Activated T-helper 1 cell treated with anti-CD3 and anti-CD28 coated beads, Interleukin-12 subunit alpha, Interleukin-12 subunit beta, Interleukin-2, Interleukin-4 antibody, amounts not matched to agents 30 ng/mL and 10 ng/mL and 1 ng/mL, durations not matched to agents 14 hours and 24 hours and 36 hours (primary cell): ENCODE measurements at regions of chr4 and their contacts with region 1.

Region 1: GRCh38 chr4:98928505-98929340 is at the start of gene EIF4E:
- DNase-seq: peak; percentile 96
- H3K4me3 Mint-ChIP-seq: peak within 1 kb of the TSS; percentile 98
- H3K27ac Mint-ChIP-seq: peak within 1 kb of the TSS; percentile 100
- H3K4me1 Mint-ChIP-seq: peaks cover 46% of the 10 kb centered on the region
- H3K27me3 Mint-ChIP-seq: no peaks in the 10 kb centered on the region
- total RNA-seq, gene EIF4E: 137 and 147 TPM in 2 replicates

Region 2: DNA sequence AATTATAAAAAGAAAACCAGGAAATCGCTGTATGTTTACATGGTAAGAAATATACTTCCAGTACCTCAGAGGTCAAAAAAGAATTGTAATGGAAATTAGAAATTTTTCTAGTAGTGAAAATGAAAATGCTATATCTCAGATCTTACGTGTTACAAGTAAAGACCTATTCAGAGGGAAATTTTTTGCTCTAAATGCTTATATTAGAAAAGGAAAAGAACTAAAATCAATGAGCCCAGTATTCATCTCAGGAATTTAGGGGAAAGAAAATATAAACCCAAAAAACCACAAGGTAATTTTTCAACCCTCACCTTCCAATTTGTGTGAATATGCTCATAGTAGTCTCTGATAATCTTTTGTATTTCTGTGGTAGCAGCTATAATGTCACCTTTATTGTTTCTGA is 521.9 kb before region 1 on chr4:
- intact Hi-C with region 1: loop called (anchors 5 kb)
- DNase-seq: no peak
- H3K4me3 Mint-ChIP-seq: no peak overlapping the region
- H3K27ac Mint-ChIP-seq: no peak overlapping the region
- H3K4me1 Mint-ChIP-seq: peaks cover 25% of the 10 kb centered on the region
- H3K27me3 Mint-ChIP-seq: no peaks in the 10 kb centered on the region

Region 3: DNA sequence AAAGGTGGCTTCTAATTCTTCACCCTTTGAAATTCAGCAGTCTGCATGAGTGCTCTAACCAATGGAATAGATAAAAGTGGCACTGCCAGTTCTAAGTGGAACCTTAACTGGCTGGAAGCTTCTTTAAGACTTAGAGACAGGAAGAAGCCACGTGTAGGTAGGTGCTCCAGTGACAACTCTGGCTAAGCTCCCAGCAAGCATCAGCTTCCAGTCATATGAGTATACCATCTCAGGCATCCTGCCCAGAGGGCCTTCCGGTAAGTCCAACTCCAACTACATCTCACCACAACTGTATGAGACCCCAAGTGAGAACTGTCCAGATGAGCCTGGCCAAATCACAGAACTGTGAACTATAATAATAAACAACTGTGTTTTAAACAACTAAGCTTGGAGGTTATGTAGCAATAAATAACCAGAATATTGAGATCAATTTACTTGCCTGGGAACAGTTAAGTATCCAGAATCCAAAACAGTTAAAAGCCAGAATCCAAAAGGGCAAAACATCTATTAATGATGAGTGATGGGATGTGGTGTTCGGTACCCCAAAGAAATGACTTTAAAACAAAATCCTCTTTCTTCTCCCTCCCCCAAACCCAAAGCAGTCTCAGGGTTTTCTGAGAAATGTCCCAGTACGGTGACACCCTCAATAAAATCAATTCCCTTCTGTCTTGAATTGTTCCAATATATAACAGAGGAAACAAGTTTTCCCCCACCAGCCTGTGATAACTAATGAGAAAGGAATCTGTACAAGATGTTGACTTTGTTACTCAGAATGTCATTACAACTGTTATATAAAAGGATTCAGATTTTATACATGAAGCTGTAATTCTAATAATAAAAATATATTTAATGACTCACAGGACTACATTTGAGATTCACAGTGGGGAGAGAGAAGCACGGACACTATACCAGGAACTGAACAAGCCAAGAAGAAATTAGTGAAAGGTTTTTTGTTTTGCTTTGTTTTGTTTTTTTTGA is 274.5 kb before region 1 on chr4:
- intact Hi-C with region 1: no loop called
- DNase-seq: no peak
- H3K4me3 Mint-ChIP-seq: peak overlapping the region; percentile 1
- H3K27ac Mint-ChIP-seq: no peak overlapping the region
- H3K4me1 Mint-ChIP-seq: peaks cover 70% of the 10 kb centered on the region
- H3K27me3 Mint-ChIP-seq: no peaks in the 10 kb centered on the region

Region 4: GRCh38 chr4:98879515-98879914 is 49.2 kb before region 1 on chr4:
- intact Hi-C with region 1: loop called (anchors 5 kb)
- DNase-seq: no peak
- H3K4me3 Mint-ChIP-seq: no peak overlapping the region
- H3K27ac Mint-ChIP-seq: no peak overlapping the region
- H3K4me1 Mint-ChIP-seq: peaks cover 5% of the 10 kb centered on the region
- H3K27me3 Mint-ChIP-seq: no peaks in the 10 kb centered on the region

Region 5: DNA sequence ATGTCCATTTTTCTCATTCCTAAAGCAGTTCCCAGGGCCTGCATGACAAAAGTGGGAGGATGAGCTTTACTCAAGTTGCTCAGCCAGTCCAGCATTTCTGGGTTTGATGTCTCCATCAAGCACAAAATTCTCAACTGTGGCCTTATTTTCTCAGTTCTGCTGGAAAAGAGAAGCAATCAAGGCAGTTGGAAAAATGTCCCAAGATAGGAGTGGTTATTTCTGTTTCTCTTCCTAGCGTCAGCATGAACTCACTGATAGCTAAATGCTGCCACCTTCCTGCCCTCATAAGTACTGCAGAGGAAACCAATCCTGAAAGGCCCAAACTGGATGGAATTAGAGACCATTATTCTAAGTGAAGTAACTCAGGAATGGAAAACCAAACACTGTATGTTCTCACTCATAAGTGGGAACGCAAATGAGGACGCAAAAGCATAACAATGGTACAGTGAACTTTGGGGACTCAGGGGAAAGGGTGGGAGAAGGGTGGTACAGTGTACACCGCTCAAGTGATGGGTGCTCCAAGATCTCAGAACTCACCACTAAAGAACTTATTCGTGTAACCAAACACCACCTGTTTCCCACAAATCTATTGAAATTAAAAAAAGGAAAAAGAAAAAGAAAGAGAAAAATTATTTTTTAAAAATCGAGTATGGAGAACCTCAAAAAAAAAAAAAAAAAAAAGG is 476.9 kb after region 1 on chr4:
- intact Hi-C with region 1: loop called (anchors 10 kb)
- DNase-seq: peak; percentile 25
- H3K4me3 Mint-ChIP-seq: no peak overlapping the region
- H3K27ac Mint-ChIP-seq: no peak overlapping the region
- H3K4me1 Mint-ChIP-seq: peaks cover 19% of the 10 kb centered on the region
- H3K27me3 Mint-ChIP-seq: peaks cover 11% of the 10 kb centered on the region

Region 6: GRCh38 chr4:99847362-99847976 is 918.7 kb after region 1 on chr4:
- intact Hi-C with region 1: loop called (anchors 5 kb)
- DNase-seq: no peak
- H3K4me3 Mint-ChIP-seq: peak overlapping the region; percentile 59
- H3K27ac Mint-ChIP-seq: peak overlapping the region; percentile 95
- H3K4me1 Mint-ChIP-seq: peaks cover 83% of the 10 kb centered on the region
- H3K27me3 Mint-ChIP-seq: no peaks in the 10 kb centered on the region